Pancreas (tissue), 10 donors: ENCODE measurements at regions of chr20 and their contacts with region 1.

Region 1: GRCh38 chr20:62064788-62065668 is 653 bp downstream of the TAF4 start:
- DNase-seq: peak in 4 of 6 donors; percentile 23 to 82 (median 70)
- ATAC-seq: peak in 3 of 4 donors; percentile 2 to 18 (median 5)
- H3K4me3 ChIP-seq: peak overlapping the region in 3 of 4 donors; percentile 29 to 65 (median 61)
- H3K27ac ChIP-seq: peak overlapping the region in 1 of 4 donors; percentile 58
- H3K4me1 ChIP-seq: peaks cover 15 to 27% (median 27%) of the 10 kb centered on the region in 3 donors
- H3K27me3 ChIP-seq: no peaks in the 10 kb centered on the region
- CTCF ChIP-seq: no peak

Region 2: GRCh38 chr20:61949714-61950640 is 115.1 kb before region 1 on chr20:
- intact Hi-C with region 1: no loop called
- DNase-seq: peak in 2 of 6 donors; percentile 8 to 44
- ATAC-seq: no peak
- H3K4me3 ChIP-seq: no peak overlapping the region
- H3K27ac ChIP-seq: no peak overlapping the region
- H3K4me1 ChIP-seq: no peaks in the 10 kb centered on the region
- H3K27me3 ChIP-seq: no peaks in the 10 kb centered on the region
- CTCF ChIP-seq: no peak

Region 3: GRCh38 chr20:62121776-62122631 is 57.0 kb after region 1 on chr20 and contains the start of gene LSM14B:
- intact Hi-C with region 1: loop called in 2 of 3 experiments (anchors 5 kb)
- DNase-seq: peak; percentile 92 to 98 (median 98)
- ATAC-seq: peak; percentile 82 to 91 (median 86)
- H3K4me3 ChIP-seq: peak within 1 kb of the TSS; percentile 50 to 87 (median 72)
- H3K27ac ChIP-seq: peak within 1 kb of the TSS; percentile 93 to 97 (median 94)
- H3K4me1 ChIP-seq: peaks cover 18 to 22% (median 18%) of the 10 kb centered on the region in 3 donors
- H3K27me3 ChIP-seq: no peaks in the 10 kb centered on the region
- CTCF ChIP-seq: no peak
- total RNA-seq, gene LSM14B: 14.9 to 19.7 (median 16.7) TPM

Region 4: GRCh38 chr20:62716198-62716940 is 651.3 kb after region 1 on chr20:
- intact Hi-C with region 1: no loop called
- DNase-seq: peak in 1 of 6 donors; percentile 34
- ATAC-seq: no peak
- H3K4me3 ChIP-seq: no peak overlapping the region
- H3K27ac ChIP-seq: no peak overlapping the region
- H3K4me1 ChIP-seq: no peaks in the 10 kb centered on the region
- H3K27me3 ChIP-seq: no peaks in the 10 kb centered on the region
- CTCF ChIP-seq: no peak